ENCODE measurements at regions of chr1 and their contacts with region 1.

Region 1: DNA sequence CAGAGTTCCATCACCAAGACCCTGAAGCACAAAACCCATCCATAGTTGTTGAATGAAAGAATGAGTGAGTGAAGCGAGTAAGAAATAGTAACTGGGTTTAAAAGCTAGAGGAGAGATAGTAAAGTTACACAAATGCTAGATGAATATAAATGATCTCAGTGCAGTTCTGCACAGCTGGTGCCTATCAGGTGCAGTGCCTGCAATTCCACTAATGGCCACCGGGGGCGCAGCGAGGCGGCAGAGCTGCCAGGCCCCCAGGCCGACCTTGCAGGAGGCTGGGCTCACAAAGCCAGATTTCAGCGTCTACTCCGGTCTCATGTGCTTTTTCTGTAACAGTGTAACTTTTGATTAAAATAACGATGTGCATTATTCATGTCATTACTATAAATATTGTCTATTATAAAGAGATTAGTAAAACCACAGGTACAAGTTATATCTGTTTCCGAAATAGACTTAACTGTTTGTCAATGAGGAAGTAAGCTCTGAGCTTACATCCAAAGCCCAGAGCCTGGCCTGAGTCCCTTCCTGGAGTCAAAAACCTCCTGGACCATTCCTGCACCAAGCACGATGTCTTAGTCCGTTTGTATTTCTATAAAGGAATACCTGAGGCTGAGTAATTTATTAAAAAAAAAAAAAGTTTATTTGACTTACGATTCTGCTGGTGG is 477.6 kb downstream of the NPHP4 start:
- DNase-seq: peak; percentile 51 to 98 (median 82)
- ATAC-seq: peak; percentile 77 to 91 (median 90)
- H3K4me3 ChIP-seq: no peak overlapping the region
- H3K27ac ChIP-seq: no peak overlapping the region
- H3K4me1 ChIP-seq: peaks cover 0 to 10% (median 4%) of the 10 kb centered on the region in 3 donors
- H3K27me3 ChIP-seq: no peaks in the 10 kb centered on the region
- CTCF ChIP-seq: peak; percentile 100

Region 2: DNA sequence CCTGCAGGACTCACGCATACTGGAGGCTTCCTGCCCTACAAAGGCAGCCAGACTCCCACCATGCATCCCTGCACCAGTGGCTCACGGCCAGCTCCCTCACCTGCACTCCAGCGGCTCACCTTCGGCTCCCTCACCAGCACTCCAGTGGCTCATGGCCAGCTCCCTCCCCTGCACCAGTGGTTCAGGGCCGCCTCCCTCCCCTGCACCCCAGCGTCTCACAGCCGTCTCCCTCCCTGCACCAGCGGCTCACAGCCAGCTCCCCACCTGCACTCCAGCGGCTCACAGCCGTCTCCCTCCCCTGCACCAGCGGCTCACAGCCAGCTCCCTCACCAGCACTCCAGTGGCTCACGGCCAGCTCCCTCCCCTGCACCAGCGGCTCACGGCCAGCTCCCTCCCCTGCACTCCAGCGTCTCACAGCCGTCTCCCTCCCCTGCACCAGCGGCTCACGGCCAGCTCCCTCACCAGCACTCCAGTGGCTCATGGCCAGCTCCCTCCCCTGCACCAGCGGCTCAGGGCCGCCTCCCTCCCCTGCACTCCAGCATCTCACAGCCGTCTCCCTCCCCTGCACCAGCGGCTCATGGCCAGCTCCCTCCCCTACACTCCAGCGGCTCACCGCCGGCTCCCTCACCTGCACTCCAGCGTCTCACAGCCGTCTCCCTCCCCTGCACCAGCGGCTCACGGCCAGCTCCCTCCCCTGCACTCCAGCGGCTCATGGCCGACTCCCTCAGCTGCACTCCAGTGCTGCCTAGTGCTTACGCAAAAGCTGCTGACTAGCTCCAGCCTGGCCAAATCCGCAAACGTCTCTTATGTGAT is 153.1 kb after region 1 on chr1:
- intact Hi-C with region 1: no loop called
- DNase-seq: peak in 1 of 6 donors; percentile 25
- ATAC-seq: no peak
- H3K4me3 ChIP-seq: no peak overlapping the region
- H3K27ac ChIP-seq: no peak overlapping the region
- H3K4me1 ChIP-seq: no peaks in the 10 kb centered on the region
- H3K27me3 ChIP-seq: no peaks in the 10 kb centered on the region
- CTCF ChIP-seq: no peak

Region 3: GRCh38 chr1:5975133-5975880 is 460.7 kb after region 1 on chr1:
- intact Hi-C with region 1: loop called in 2 of 3 experiments (anchors 5 to 10 kb)
- DNase-seq: peak; percentile 36 to 88 (median 70)
- ATAC-seq: peak; percentile 67 to 87 (median 81)
- H3K4me3 ChIP-seq: no peak overlapping the region
- H3K27ac ChIP-seq: no peak overlapping the region
- H3K4me1 ChIP-seq: peaks cover 7 to 14% (median 9%) of the 10 kb centered on the region in 3 donors
- H3K27me3 ChIP-seq: no peaks in the 10 kb centered on the region
- CTCF ChIP-seq: peak; percentile 47 to 78 (median 66)